ENCODE measurements at regions of chr14 and their contacts with region 1.

Region 1: DNA sequence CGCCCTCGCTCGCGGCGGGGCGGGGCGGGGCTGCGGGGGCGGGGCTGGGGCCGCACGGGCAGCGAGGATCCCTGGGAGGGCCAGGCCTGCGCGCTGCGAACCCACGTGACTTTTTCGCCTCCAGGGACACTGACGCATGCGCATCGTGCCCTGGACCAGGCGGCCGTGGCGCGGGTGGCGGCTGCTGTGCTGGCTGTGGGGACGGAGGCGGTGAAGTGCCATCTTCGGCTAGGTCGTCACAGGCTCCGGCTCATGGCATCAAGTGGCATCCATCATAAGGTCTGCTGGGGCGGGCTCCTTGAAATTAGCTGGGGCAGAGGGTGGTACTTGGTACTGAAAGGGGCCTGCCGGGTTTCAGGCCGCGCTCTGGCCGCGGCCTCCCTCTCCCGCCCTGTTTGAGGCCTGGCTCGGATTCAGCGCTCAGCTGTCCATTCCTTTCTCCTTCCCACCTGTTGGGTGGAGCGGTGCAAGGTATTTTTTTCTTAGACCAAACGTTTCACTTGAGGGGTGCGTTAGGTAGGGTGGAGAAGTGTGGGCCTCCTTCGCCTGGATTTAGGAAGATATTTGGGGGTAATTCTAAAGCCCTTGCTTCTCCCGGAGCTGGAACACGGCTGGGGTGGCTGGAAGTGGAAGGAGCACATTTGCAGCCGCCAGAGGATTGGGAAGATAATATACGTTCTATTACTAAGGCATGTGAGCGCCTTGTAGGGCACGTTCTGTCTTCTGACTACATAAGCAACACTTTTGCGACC is at the start of gene PRPF39:
- DNase-seq: peak; percentile 91
- H3K4me3 ChIP-seq: peak within 1 kb of the TSS; percentile 56 to 80 (median 77)
- H3K27ac ChIP-seq: peak within 1 kb of the TSS; percentile 81
- H3K4me1 ChIP-seq: peaks cover 25% of the 10 kb centered on the region
- H3K27me3 ChIP-seq: no peaks in the 10 kb centered on the region
- CTCF ChIP-seq: no peak
- total RNA-seq, gene PRPF39: 27.0 to 33.0 TPM

Region 2: GRCh38 chr14:44149597-44149996 is 934.5 kb before region 1 on chr14:
- CTCF ChIA-PET with region 1: no interaction called
- dilution Hi-C with region 1: no loop called
- in situ Hi-C with region 1: no loop called
- intact Hi-C with region 1: no loop called
- DNase-seq: peak; percentile 28
- H3K4me3 ChIP-seq: no peak overlapping the region
- H3K27ac ChIP-seq: no peak overlapping the region
- H3K4me1 ChIP-seq: no peaks in the 10 kb centered on the region
- H3K27me3 ChIP-seq: no peaks in the 10 kb centered on the region
- CTCF ChIP-seq: peak; percentile 23 to 60

Region 3: DNA sequence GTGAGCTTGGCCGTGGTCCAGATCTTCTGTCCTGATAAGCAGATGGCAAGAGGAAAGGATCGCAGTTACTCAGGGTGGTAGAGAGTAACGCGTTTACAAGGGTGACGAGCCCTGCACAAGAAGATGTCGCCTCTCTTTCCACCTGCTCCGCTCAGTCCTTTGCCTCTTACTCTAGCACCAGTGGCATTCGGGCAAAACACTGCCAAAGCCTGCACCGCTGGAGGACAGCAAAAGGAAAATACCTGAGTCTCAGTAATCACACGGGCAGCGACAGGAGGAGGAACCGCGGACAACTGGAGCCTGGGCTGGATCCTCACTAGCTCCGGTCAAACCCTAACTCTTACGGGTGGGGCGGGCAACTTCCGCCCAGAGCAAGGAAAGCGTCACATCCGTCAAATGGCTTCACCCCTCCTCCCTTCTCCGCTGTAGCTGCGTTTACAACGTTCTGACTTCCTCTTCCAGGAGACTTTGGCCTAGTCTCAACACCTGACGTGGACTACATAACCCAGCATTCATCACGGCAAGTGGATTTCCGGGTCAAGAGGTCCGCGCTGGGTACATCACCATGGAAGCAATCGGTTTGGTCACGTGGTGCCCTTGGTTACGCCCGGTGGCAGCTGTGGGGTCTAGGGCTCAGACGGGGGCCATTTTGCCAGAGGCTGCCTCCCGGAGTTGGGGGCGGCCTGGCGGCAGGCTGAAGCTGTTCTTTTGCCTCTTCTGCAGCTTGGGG is 122.4 kb before region 1 on chr14 and contains the starts of genes KLHL28 and TOGARAM1:
- CTCF ChIA-PET with region 1: no interaction called
- dilution Hi-C with region 1: no loop called
- in situ Hi-C with region 1: no loop called
- intact Hi-C with region 1: loop called (anchors 2 kb)
- DNase-seq: peak; percentile 100
- H3K4me3 ChIP-seq: peak within 1 kb of the TSS; percentile 86 to 98 (median 95)
- H3K27ac ChIP-seq: peak within 1 kb of the TSS; percentile 85
- H3K4me1 ChIP-seq: peaks cover 6% of the 10 kb centered on the region
- H3K27me3 ChIP-seq: no peaks in the 10 kb centered on the region
- CTCF ChIP-seq: no peak
- total RNA-seq, gene KLHL28: 10.2 to 20.3 TPM
- total RNA-seq, gene TOGARAM1: 10.4 to 18.7 TPM

Region 4: GRCh38 chr14:45038865-45039264 is 45.3 kb before region 1 on chr14:
- CTCF ChIA-PET with region 1: no interaction called
- dilution Hi-C with region 1: loop called (anchors 5 kb)
- in situ Hi-C with region 1: no loop called
- intact Hi-C with region 1: no loop called
- DNase-seq: no peak
- H3K4me3 ChIP-seq: no peak overlapping the region
- H3K27ac ChIP-seq: no peak overlapping the region
- H3K4me1 ChIP-seq: no peaks in the 10 kb centered on the region
- H3K27me3 ChIP-seq: no peaks in the 10 kb centered on the region
- CTCF ChIP-seq: no peak

Measured in mammary epithelial cell (primary cell).